ENCODE measurements at regions of chr16 and their contacts with region 1.

Region 1: GRCh38 chr16:65950211-65950610 is 416.3 kb upstream of the CDH5 start:
- DNase-seq: no peak
- ATAC-seq: no peak
- H3K4me3 ChIP-seq: no peak overlapping the region
- H3K4me3 Mint-ChIP-seq: no peak overlapping the region
- H3K27ac ChIP-seq: no peak overlapping the region
- H3K27ac Mint-ChIP-seq: no peak overlapping the region
- H3K4me1 ChIP-seq: no peaks in the 10 kb centered on the region
- H3K4me1 Mint-ChIP-seq: no peaks in the 10 kb centered on the region
- H3K27me3 ChIP-seq: no peaks in the 10 kb centered on the region
- H3K27me3 Mint-ChIP-seq: no peaks in the 10 kb centered on the region
- CTCF ChIP-seq: no peak

Region 2: GRCh38 chr16:65793781-65794180 is 156.4 kb before region 1 on chr16:
- CTCF ChIA-PET with region 1: no interaction called
- POLR2A ChIA-PET with region 1: no interaction called
- intact Hi-C with region 1: no loop called
- DNase-seq: no peak
- ATAC-seq: no peak
- H3K4me3 ChIP-seq: no peak overlapping the region
- H3K4me3 Mint-ChIP-seq: no peak overlapping the region
- H3K27ac ChIP-seq: no peak overlapping the region
- H3K27ac Mint-ChIP-seq: no peak overlapping the region
- H3K4me1 ChIP-seq: no peaks in the 10 kb centered on the region
- H3K4me1 Mint-ChIP-seq: no peaks in the 10 kb centered on the region
- H3K27me3 ChIP-seq: no peaks in the 10 kb centered on the region
- H3K27me3 Mint-ChIP-seq: no peaks in the 10 kb centered on the region
- CTCF ChIP-seq: no peak

Region 3: DNA sequence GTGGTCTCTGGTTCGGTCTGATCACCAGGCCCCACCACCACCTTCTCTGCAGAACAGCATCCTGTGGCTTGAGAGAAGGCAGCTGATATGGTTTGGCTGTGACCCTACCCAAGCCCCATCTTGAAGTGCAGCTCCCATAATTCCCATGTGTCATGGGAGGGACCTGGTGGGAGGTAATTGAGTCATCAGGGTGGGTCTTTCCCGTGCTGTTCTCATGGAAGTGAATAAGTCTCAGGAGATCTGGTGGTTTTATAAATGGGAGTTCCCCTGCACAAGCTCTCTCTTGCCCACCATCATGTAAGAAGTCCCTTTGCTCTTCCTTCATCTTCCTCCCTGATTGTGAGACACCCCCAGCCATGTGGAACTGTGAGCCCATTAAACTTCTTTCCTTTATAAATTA is 64.0 kb after region 1 on chr16:
- CTCF ChIA-PET with region 1: no interaction called
- POLR2A ChIA-PET with region 1: no interaction called
- intact Hi-C with region 1: loop called in 1 of 2 experiments (anchors 10 kb)
- DNase-seq: no peak
- ATAC-seq: no peak
- H3K4me3 ChIP-seq: no peak overlapping the region
- H3K4me3 Mint-ChIP-seq: no peak overlapping the region
- H3K27ac ChIP-seq: no peak overlapping the region
- H3K27ac Mint-ChIP-seq: no peak overlapping the region
- H3K4me1 ChIP-seq: no peaks in the 10 kb centered on the region
- H3K4me1 Mint-ChIP-seq: no peaks in the 10 kb centered on the region
- H3K27me3 ChIP-seq: no peaks in the 10 kb centered on the region
- H3K27me3 Mint-ChIP-seq: peaks cover 2% of the 10 kb centered on the region
- CTCF ChIP-seq: no peak

Region 4: GRCh38 chr16:67897231-67897630 is 1947.0 kb after region 1 on chr16:
- CTCF ChIA-PET with region 1: no interaction called
- POLR2A ChIA-PET with region 1: no interaction called
- intact Hi-C with region 1: no loop called
- DNase-seq: no peak
- ATAC-seq: no peak
- H3K4me3 ChIP-seq: no peak overlapping the region
- H3K4me3 Mint-ChIP-seq: no peak overlapping the region
- H3K27ac ChIP-seq: no peak overlapping the region
- H3K27ac Mint-ChIP-seq: no peak overlapping the region
- H3K4me1 ChIP-seq: peaks cover 24% of the 10 kb centered on the region
- H3K4me1 Mint-ChIP-seq: peaks cover 52% of the 10 kb centered on the region
- H3K27me3 ChIP-seq: no peaks in the 10 kb centered on the region
- H3K27me3 Mint-ChIP-seq: no peaks in the 10 kb centered on the region
- CTCF ChIP-seq: no peak